Prostate gland (tissue), 2 donors: ENCODE measurements at regions of chr13 and their contacts with region 1.

Region 1: DNA sequence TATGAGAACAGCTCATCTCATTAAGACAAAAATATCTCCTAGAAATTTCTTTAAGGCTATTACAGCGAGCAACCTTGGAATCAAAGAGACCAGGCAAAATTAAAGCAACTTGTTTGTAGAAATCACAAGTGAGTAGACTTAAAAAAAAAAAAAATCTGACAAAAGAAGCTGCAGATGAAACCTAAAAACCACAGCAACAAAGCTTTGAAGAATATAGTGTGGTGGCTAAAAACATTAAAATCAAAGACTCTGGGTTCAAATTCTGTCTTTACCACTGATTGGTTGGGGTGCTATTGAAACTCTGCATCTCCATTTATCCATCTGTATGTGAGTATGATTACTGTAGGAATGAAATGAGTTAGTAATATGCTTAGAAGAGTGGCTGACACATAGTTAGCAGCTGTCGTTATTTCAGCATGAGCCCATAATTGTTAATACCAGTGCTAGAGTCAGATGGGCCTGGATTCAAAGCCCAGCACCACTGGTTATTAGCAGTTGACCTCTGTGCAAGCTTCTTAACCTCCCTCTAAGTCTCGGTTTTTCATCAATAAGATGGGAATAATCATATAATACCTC is 157.6 kb downstream of the FOXO1 start:
- DNase-seq: no peak
- H3K4me3 ChIP-seq: no peak overlapping the region
- H3K27ac ChIP-seq: no peak overlapping the region
- H3K4me1 ChIP-seq: no peaks in the 10 kb centered on the region
- H3K27me3 ChIP-seq: no peaks in the 10 kb centered on the region
- CTCF ChIP-seq: no peak
- POLR2A ChIP-seq: no peak

Region 2: DNA sequence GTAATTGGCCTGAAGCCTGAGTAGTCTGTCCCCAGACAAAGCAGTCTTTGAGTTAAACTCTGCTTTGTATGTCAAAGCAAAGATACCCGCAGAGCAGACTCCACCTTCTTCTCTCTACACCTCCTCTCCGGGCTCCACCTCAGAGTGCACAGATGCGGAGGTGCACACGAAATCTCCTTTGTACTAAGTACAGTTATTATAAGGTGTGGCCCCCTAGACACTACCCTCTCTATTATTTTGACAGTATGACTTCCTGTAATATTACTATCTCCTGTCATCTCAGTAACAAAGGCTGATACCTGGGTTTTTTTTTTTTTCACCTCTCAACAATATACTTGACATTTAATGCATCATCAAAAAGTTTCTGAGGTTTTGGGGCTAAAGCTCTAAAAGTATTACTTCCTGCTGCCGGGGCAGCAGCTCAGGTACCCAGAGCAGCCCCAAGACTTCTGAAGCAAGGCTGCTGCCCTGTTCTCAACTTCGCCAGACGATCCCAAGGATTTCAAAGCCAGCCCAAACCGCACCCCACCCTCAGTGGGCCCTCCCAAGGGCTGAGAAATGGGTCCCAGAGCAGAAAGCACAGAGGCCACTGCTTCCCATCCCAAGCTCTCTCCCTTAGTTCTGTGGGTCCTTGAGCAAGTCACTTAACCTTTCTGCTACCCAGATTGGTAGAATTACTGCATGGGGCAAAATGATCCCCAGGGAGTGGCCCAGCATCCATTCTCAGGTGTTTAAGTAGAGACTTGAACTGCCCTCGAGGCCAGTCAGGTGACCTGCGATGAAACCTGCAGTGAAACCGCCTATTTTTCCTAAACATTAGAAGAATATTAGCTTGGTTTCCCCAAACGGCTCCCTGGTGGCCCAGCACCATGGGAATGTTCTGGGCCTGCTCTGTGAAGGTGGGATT is 23.0 kb before region 1 on chr13:
- intact Hi-C with region 1: loop called (anchors 1 kb)
- DNase-seq: no peak
- H3K4me3 ChIP-seq: no peak overlapping the region
- H3K27ac ChIP-seq: no peak overlapping the region
- H3K4me1 ChIP-seq: no peaks in the 10 kb centered on the region
- H3K27me3 ChIP-seq: no peaks in the 10 kb centered on the region
- CTCF ChIP-seq: no peak
- POLR2A ChIP-seq: no peak